Mammary epithelial cell (primary cell): ENCODE measurements at regions of chr1 and their contacts with region 1.

Region 1: DNA sequence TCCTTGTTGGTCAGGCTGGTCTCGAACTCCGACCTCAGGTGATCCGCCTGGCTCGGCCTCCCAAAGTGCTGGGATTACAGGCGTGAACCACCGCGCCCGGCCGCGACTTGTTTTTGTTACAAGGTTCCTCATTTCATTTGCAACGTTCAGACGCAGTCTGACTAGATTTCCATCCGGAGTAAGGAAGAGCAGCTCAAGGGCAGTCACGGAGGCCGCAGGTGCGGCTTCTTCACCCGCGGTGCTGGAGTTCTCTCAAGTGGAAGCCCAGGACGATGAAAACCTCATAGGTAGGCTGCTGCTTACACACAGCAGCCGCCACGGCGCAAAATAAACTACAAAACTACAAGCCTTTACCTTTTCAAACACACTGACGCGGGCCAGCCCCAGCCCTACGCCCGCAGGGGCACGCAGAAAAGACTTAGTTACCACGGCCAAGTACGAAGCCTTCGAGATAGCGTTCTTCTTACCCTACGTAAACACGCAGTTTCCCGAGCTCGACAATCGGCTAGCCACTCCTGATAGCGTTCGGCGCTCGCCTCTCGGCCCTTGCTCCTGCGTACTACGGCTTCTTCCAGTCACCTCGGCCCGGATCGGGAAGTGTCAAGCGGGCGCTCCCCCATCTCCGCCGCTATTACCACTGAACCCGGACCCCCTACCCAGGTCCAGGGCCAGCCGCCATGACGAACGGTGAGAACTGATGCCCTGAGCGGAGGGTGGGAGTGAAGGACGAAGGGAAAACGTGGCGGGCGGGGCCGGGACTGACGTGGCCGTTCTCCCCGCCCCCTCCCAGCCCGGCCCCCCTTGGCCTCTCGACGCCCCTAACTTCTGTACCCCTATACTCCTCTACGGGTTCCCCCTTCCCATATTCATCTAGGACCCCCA is at the start of gene TMEM167B:
- DNase-seq: peak; percentile 91
- H3K4me3 ChIP-seq: peak within 1 kb of the TSS; percentile 65 to 81 (median 77)
- H3K27ac ChIP-seq: peak within 1 kb of the TSS; percentile 77
- H3K4me1 ChIP-seq: peaks cover 9% of the 10 kb centered on the region
- H3K27me3 ChIP-seq: no peaks in the 10 kb centered on the region
- CTCF ChIP-seq: no peak
- total RNA-seq, gene TMEM167B: 24.8 to 27.4 TPM

Region 2: DNA sequence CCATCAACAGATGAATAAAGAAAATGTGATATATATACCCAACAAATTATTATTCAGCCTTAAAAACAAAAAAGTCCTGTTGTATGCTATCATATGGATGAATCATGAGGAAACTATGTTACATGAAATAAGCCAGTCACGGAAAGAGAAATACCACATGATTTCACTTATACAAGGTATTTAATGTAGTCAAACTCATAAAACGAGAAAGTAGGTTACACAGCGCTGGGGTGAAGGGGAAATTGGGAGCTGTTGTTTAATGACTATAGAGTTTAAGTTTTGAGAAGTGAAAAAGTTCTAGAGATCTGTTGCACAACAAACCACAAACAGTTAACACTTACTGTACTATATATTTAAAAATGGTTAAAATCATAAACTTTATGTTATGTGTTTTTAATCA is 948.8 kb before region 1 on chr1:
- CTCF ChIA-PET with region 1: no interaction called
- dilution Hi-C with region 1: no loop called
- in situ Hi-C with region 1: no loop called
- intact Hi-C with region 1: no loop called
- DNase-seq: peak; percentile 41
- H3K4me3 ChIP-seq: no peak overlapping the region
- H3K27ac ChIP-seq: no peak overlapping the region
- H3K4me1 ChIP-seq: peaks cover 7% of the 10 kb centered on the region
- H3K27me3 ChIP-seq: no peaks in the 10 kb centered on the region
- CTCF ChIP-seq: no peak

Region 3: DNA sequence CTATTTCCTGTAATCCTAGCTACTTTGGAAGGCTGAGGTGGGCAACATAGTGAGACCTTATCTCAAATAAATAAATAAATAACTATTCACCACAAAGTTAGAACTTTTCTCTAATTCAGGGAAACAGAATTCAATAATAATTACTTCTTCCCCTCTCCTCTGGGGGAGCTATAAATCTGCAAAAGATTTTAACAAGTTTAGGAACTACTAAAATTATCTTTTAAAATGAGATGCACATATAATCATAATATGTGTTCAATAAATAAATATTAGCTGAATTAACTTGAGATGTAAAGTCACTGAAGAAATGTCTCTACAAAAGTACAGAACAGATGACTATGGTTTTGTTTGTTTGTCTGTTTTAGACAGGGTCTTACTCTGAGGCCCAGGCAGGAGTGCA is 62.6 kb before region 1 on chr1:
- CTCF ChIA-PET with region 1: interaction called, 10 read pairs
- dilution Hi-C with region 1: no loop called
- in situ Hi-C with region 1: no loop called
- intact Hi-C with region 1: no loop called
- DNase-seq: no peak
- H3K4me3 ChIP-seq: no peak overlapping the region
- H3K27ac ChIP-seq: no peak overlapping the region
- H3K4me1 ChIP-seq: peaks cover 9% of the 10 kb centered on the region
- H3K27me3 ChIP-seq: no peaks in the 10 kb centered on the region
- CTCF ChIP-seq: peak; percentile 20 to 28

Region 4: GRCh38 chr1:109075531-109076490 is 14.6 kb before region 1 on chr1 and contains the start of gene TAF13:
- CTCF ChIA-PET with region 1: interaction called, 17 read pairs
- dilution Hi-C with region 1: no loop called
- in situ Hi-C with region 1: no loop called
- intact Hi-C with region 1: loop called (anchors 1 kb)
- DNase-seq: peak; percentile 93
- H3K4me3 ChIP-seq: peak within 1 kb of the TSS; percentile 88 to 94 (median 92)
- H3K27ac ChIP-seq: peak within 1 kb of the TSS; percentile 90
- H3K4me1 ChIP-seq: peaks cover 8% of the 10 kb centered on the region
- H3K27me3 ChIP-seq: no peaks in the 10 kb centered on the region
- CTCF ChIP-seq: peak in 1 of 2 donors; percentile 34
- total RNA-seq, gene TAF13: 67.8 to 80.4 TPM